Activated CD4-positive, alpha-beta T cell treated with anti-CD3 and anti-CD28 coated beads for 36 hours (primary cell): ENCODE measurements at regions of chr21 and their contacts with region 1.

Region 1: GRCh38 chr21:31604591-31605190 is 54.8 kb upstream of the SOD1 start:
- DNase-seq: peak; percentile 87
- ATAC-seq: peak; percentile 80
- H3K4me3 Mint-ChIP-seq: no peak overlapping the region
- H3K27ac Mint-ChIP-seq: no peak overlapping the region
- H3K4me1 Mint-ChIP-seq: peaks cover 10% of the 10 kb centered on the region
- H3K27me3 Mint-ChIP-seq: no peaks in the 10 kb centered on the region

Region 2: GRCh38 chr21:30491963-30492428 is 1112.7 kb before region 1 on chr21 and contains the start of gene KRTAP19-3:
- CTCF ChIA-PET with region 1: no interaction called
- POLR2A ChIA-PET with region 1: no interaction called
- intact Hi-C with region 1: no loop called
- DNase-seq: no peak
- ATAC-seq: no peak
- H3K4me3 Mint-ChIP-seq: no peak within 1 kb of the TSS
- H3K27ac Mint-ChIP-seq: no peak within 1 kb of the TSS
- H3K4me1 Mint-ChIP-seq: no peaks in the 10 kb centered on the region
- H3K27me3 Mint-ChIP-seq: peaks cover 2% of the 10 kb centered on the region
- total RNA-seq, gene KRTAP19-3: not detected

Region 3: GRCh38 chr21:30831194-30831765 is 773.4 kb before region 1 on chr21:
- CTCF ChIA-PET with region 1: no interaction called
- POLR2A ChIA-PET with region 1: no interaction called
- intact Hi-C with region 1: loop called in 1 of 2 experiments (anchors 10 kb)
- DNase-seq: peak; percentile 67
- ATAC-seq: no peak
- H3K4me3 Mint-ChIP-seq: no peak overlapping the region
- H3K27ac Mint-ChIP-seq: no peak overlapping the region
- H3K4me1 Mint-ChIP-seq: no peaks in the 10 kb centered on the region
- H3K27me3 Mint-ChIP-seq: peaks cover 7% of the 10 kb centered on the region

Region 4: GRCh38 chr21:31098576-31099005 is 506.1 kb before region 1 on chr21:
- CTCF ChIA-PET with region 1: interaction called, 26 read pairs
- POLR2A ChIA-PET with region 1: no interaction called
- intact Hi-C with region 1: loop called (anchors 1 kb)
- DNase-seq: peak; percentile 86
- ATAC-seq: peak; percentile 89
- H3K4me3 Mint-ChIP-seq: no peak overlapping the region
- H3K27ac Mint-ChIP-seq: peak overlapping the region; percentile 38
- H3K4me1 Mint-ChIP-seq: peaks cover 21% of the 10 kb centered on the region
- H3K27me3 Mint-ChIP-seq: peaks cover 3% of the 10 kb centered on the region

Region 5: GRCh38 chr21:32120230-32120629 is 515.5 kb after region 1 on chr21:
- CTCF ChIA-PET with region 1: no interaction called
- POLR2A ChIA-PET with region 1: no interaction called
- intact Hi-C with region 1: no loop called
- DNase-seq: no peak
- ATAC-seq: no peak
- H3K4me3 Mint-ChIP-seq: no peak overlapping the region
- H3K27ac Mint-ChIP-seq: no peak overlapping the region
- H3K4me1 Mint-ChIP-seq: no peaks in the 10 kb centered on the region
- H3K27me3 Mint-ChIP-seq: peaks cover 12% of the 10 kb centered on the region